Activated CD8-positive, alpha-beta memory T cell treated with anti-CD3 and anti-CD28 coated beads, Interleukin-2, amount 10 ng/mL, durations not matched to agents 7 days and 5 days (primary cell): ENCODE measurements at regions of chr10 and their contacts with region 1.

Region 1: DNA sequence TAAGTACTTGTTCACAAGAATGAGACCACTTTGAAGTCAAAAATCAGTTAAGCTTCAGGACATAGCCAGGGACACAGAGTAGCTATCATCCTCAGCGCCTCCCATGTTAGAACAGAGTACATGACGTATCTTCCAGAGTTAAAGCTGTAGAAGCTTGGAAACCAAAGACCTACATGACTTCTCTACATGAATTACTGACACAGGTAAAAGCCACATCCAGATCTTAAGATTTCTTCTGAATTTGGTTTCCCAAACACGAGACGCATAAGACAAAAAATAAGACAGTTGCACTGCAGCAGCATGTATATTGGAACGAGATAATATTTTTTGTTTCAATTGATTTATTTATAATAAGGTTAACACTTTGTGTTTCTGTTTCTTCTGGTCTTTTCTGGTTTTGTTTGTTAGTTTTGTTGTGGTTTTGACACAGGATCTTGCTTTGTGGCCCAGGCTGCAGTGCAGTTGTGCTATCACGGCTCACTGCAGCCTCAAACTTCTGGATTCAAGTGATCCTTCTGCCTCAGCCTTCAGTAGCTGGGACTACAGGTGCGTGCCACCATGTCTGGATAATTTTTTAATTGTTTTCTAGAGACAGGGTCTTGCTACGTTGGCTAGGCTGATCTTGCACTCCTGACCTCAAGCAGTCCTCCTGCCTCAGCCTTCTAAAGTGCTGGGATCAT is 10.2 kb upstream of the EPC1 start:
- DNase-seq: peak; percentile 77
- ATAC-seq: peak; percentile 83
- H3K4me3 Mint-ChIP-seq: peak overlapping the region; percentile 65
- H3K27ac Mint-ChIP-seq: peak overlapping the region; percentile 94
- H3K4me1 Mint-ChIP-seq: peaks cover 80% of the 10 kb centered on the region
- H3K27me3 Mint-ChIP-seq: no peaks in the 10 kb centered on the region

Region 2: DNA sequence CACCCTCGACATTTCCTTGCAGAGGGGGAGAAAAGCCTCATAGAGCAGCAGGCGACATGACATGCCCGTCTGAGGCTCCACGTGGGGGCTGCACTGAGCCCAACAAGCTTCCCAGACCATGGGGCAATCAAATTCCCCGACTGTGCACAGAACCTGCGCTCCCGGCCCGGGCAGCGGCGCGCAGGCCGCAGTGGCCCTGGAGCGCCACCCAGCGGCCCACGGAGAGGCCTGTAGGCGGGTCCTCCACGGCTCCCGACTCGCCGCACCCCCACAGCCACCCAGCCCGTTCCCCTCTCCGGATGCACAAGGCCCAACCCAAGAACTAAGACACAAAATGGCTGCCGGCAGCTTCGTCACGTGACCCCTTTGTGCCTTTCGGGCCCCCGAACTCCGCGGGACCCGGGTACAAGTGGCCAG is 11.1 kb before region 1 on chr10:
- CTCF ChIA-PET with region 1: interaction called, 19 read pairs
- DNase-seq: peak; percentile 98
- ATAC-seq: peak; percentile 88
- H3K4me3 Mint-ChIP-seq: peak overlapping the region; percentile 93
- H3K27ac Mint-ChIP-seq: peak overlapping the region; percentile 100
- H3K4me1 Mint-ChIP-seq: peaks cover 61% of the 10 kb centered on the region
- H3K27me3 Mint-ChIP-seq: no peaks in the 10 kb centered on the region

Region 3: DNA sequence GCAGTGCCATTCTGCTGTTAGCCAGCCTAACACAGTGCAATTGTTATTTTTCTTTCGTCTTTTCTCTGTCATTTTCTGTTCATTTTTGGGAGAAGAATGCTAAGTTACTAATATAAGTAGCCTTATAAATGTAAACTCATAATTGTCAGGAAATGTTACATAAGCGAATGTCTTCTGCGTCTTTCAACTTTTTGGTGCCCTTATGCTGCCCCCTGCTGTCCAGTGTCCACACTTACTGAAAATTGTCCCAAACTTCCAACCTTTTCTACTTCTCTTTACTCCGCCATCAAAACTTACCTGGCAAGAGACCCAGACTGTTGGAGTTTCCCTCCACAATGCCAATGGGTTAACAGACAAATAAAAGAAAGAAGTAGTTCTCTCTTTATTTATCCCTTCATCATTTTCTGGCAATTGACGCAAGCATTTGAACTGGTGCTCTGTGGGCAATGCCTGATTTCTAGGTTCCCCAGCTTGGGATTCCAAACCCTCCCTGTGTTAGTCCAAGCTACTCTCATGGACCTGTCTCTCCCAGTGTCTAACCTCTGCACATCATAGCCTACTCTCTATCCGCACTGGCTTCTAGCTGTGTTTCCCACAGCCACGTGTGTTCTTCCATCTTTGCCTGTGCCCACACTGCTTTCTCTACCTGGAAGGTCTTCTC is 10.7 kb after region 1 on chr10:
- CTCF ChIA-PET with region 1: interaction called, 19 read pairs
- DNase-seq: peak; percentile 80
- ATAC-seq: peak; percentile 54
- H3K4me3 Mint-ChIP-seq: no peak overlapping the region
- H3K27ac Mint-ChIP-seq: peak overlapping the region; percentile 65
- H3K4me1 Mint-ChIP-seq: peaks cover 43% of the 10 kb centered on the region
- H3K27me3 Mint-ChIP-seq: no peaks in the 10 kb centered on the region

Region 4: DNA sequence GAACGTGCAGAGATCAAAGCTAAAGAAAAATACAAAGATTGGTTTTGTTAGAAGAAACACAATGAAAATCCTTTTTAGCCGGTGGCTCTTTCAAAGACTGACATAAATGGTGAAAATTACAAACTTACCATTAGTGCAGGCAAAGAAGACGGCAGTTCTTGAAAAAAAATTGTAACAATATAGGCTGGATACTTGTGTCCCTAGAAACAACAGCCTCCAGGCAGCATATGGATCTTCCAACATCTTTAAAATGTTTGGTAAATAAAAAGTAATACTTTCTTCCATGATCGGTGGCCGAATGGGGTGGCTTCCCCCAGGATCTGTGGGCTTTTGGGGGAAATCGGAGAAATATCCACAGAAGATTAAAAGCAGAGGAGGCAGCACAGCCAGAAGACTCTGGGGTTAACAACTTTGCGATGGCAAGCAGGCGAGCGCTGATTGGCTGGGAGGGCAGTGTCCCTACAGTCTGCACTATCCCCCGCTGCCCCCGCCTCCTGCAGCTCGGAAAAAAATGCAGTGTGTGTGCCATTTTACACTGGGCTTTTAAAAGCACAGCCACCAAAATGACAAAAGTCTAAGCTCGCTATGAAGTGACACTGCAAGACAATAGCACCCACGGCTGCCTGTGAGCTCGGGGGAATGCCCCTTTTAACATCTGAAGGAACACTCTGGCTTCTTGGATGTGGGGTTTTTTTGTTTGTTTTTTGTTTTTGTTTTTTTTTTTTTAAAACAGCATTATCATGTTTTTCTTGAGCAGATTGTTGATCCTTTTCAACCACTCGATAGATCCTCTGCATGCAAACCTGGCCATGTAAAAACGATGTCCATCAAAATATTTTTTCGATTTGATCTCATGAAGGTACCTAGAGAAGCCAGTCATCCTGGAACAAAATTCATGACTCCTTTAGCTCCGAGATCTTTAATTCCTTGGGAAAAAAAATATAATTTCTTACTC is 21.4 kb after region 1 on chr10:
- CTCF ChIA-PET with region 1: interaction called, 11 read pairs
- DNase-seq: peak; percentile 97
- ATAC-seq: peak; percentile 98
- H3K4me3 Mint-ChIP-seq: no peak overlapping the region
- H3K27ac Mint-ChIP-seq: no peak overlapping the region
- H3K4me1 Mint-ChIP-seq: peaks cover 23% of the 10 kb centered on the region
- H3K27me3 Mint-ChIP-seq: no peaks in the 10 kb centered on the region

Region 5: DNA sequence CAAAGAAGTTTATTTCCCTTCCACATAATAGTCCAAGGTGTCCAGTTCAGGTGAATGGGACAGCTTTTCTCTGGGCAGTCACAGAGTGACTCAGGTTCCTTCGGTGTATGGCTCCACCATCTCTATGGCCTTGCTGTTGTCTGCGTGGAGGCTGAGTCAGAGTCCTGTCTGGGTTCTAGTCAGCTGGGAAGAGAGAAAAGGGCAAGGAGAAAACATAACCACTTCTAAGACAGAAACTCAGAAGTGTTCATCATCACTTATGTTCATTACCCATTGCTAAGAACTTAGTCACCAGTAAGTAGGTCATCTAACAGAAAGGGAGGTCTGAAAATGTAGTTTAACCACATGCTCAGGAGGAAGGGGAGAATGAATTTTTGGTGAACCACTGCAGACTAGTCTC is 56.3 kb after region 1 on chr10:
- CTCF ChIA-PET with region 1: no interaction called
- DNase-seq: peak; percentile 49
- ATAC-seq: peak; percentile 60
- H3K4me3 Mint-ChIP-seq: no peak overlapping the region
- H3K27ac Mint-ChIP-seq: no peak overlapping the region
- H3K4me1 Mint-ChIP-seq: peaks cover 4% of the 10 kb centered on the region
- H3K27me3 Mint-ChIP-seq: no peaks in the 10 kb centered on the region